ENCODE measurements at regions of chr5 and their contacts with region 1.

Region 1: DNA sequence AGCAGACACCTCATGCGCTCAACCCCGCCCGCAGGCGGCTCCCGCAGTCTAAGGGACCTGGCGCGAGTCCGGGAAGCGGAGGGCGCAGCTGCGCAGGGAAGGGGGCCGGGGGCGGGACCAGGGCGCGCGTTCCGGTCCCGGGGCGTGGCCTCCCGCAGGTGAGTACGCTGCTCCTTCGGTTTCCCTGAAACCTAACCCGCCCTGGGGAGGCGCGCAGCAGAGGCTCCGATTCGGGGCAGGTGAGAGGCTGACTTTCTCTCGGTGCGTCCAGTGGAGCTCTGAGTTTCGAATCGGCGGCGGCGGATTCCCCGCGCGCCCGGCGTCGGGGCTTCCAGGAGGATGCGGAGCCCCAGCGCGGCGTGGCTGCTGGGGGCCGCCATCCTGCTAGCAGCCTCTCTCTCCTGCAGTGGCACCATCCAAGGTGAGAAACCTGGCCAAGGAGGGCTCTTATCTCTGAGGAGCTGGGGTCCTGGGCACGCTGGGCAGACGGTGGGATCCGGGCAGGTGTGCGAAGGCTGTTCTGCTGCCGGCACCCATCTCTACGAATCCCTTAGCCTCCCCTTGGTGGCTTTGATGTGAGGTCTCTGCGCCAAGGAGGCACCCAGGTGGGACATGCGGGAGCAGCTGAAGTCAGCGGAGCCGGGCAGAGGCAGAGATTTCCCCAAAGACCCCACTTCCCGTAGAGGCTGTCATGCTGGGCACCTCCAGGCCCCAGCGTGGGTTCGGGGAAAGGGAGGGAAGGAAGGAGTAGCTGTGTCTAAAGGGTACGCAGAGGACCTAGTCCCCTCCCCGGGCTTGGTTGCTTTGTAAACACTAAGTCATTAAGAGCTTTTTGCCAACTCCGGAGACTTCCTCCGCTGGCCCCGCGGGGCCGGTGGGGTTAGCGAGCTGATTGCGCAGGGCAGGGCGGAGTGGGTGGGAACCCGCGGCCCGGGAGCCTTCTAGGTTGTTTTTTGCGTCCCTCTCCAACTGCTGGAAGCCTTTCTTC is at the start of gene F2RL1:
- DNase-seq: peak; percentile 90
- H3K4me3 ChIP-seq: peak within 1 kb of the TSS; percentile 95
- CTCF ChIP-seq: no peak

Region 2: GRCh38 chr5:75824323-75824722 is 994.8 kb before region 1 on chr5:
- in situ Hi-C with region 1: no loop called
- DNase-seq: no peak
- H3K4me3 ChIP-seq: no peak overlapping the region
- CTCF ChIP-seq: no peak

Region 3: DNA sequence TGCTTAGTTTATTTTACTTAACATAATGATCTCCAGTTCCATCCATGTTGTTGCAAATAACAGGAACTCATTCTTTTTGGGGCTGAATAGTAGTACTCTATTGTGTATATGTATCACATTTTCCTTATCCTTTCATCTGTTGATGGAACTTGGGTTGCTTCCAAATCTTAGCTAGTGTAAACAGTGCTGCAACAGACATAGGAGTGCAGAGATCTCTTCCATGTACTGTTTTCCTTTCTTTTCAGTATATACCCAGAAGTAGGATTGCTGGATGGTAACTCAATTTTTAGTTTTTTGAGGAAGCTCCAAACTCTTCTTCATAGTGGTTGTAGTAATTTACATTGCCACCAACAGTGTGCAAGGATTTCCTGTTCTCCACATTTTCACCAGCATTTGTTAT is 963.1 kb before region 1 on chr5:
- in situ Hi-C with region 1: no loop called
- DNase-seq: no peak
- H3K4me3 ChIP-seq: no peak overlapping the region
- CTCF ChIP-seq: no peak

Region 4: DNA sequence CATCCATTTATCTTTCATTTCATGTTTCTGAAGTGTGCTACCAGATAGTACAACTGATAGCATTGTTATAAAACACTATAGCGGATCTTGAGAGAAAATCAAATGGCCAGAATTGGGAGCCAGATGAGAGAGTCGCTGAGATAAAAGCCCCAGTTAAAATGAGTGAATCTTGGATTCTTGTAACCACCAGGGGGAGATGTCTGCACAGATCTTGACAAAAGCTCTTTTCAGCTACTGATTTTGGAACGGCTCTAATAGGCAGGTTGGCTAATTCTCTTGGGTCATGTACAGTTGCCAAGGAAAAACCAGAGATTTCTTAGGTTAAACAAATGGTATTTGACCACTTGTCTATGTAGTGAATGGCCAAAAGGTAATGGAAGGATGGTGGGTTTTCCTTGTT is 217.7 kb before region 1 on chr5:
- in situ Hi-C with region 1: loop called (anchors 25 kb)
- DNase-seq: peak; percentile 73
- H3K4me3 ChIP-seq: no peak overlapping the region
- CTCF ChIP-seq: peak; percentile 62

Region 5: GRCh38 chr5:76715736-76716455 is 103.2 kb before region 1 on chr5 and contains the start of gene F2R:
- in situ Hi-C with region 1: loop called (anchors 25 kb)
- DNase-seq: peak; percentile 88
- H3K4me3 ChIP-seq: peak within 1 kb of the TSS; percentile 97
- CTCF ChIP-seq: peak; percentile 53